ENCODE measurements at regions of chr11 and their contacts with region 1.

Region 1: DNA sequence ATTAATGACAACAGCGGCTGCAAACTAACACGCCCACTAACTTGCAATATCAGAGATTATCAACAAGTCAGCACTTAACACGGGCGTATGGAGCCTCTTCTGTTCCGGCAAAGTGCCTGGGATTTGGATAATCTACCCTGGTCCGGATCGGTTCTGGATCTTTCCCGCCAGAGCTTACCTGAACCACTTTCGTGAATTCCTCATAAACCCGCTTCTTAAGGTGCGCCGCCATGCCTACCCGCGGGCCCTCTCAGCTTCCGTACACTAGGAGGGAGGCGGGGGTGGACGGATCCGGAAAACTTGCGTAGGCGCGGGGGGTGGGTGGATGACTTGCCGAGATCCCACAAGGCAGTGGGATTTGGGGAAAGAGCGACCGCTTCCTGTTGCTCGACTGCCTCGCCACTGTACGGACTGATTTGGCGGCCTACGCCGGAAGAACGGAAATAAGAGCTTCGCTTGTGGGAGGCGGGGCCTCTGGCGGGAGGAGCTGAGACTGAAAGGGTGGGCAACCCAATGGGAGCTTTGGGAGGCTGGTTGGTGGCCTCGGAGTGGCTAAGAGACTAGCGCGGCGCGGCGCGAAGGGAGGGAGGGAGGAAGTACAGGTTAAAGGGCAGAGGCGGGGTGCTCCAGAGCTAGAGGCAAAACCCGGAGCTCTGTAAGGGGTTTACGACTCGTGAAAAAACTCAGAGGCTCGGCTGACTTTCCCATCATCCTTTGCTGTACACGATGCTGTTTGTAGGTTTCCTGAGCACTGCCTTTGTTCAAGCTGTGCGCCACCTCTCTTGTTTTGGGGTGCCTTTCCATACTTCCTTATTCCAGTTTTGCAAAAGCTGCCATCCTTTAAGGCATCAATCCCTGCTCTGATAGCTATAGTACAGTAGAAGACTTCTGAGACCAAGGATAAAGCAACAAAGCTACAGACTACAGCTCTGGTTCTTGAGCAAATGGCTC is at the start of gene INTS4:
- DNase-seq: peak; percentile 100
- H3K4me3 ChIP-seq: peak within 1 kb of the TSS; percentile 75 to 99 (median 95)
- H3K27ac ChIP-seq: peak within 1 kb of the TSS; percentile 47
- H3K4me1 ChIP-seq: peaks cover 15% of the 10 kb centered on the region
- H3K27me3 ChIP-seq: no peaks in the 10 kb centered on the region
- CTCF ChIP-seq: no peak
- POLR2A ChIP-seq: peak; percentile 77
- total RNA-seq, gene INTS4: 37.8 and 39.2 TPM in 2 replicates

Region 2: DNA sequence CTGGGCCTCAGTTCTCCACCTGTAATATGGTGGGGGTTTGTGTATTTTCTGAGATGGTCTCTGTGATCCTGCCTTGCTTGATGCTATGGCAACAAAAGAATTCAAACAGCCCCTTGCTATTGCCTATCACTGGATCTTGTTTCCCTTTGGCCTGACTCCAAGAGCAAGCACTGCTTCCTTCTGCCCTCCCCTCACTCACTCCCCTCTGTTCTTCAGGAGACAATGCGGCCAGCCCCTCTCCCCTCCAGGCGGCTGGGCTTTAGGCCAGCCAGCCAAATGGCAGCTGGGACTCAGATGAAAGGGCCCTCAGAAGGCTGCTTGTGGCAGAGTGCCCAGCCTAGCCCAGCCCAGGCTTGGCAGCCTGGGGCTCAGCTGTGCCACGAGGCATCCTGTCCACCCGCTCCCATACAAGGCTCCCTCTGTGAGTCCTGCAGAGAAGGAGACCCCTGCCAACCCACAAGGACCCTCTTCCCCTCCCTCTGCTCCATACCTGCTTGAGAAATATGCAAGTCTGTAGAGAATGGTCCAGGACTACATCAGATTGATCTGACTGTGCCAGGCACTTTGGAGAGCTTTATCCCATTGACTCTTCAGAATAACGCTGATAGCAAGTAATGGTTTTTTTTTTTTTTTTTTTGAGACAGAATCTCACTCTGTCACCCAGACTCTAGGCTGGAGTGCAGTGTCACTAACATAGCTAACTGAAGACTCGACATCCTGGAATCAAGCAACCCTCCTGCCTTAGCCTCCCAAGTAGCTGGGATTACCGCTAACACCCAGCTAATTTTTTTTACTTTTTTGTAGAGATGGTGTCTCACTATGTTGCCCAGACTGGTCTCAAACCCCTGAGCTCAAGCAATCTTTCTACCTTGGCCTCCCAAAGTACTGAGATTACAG is 36.0 kb after region 1 on chr11:
- CTCF ChIA-PET with region 1: interaction called, 5 read pairs
- POLR2A ChIA-PET with region 1: no interaction called
- dilution Hi-C with region 1: no loop called
- intact Hi-C with region 1: loop called (anchors 2 kb)
- DNase-seq: peak; percentile 96
- H3K4me3 ChIP-seq: no peak overlapping the region
- H3K27ac ChIP-seq: peak overlapping the region; percentile 40
- H3K4me1 ChIP-seq: peaks cover 13% of the 10 kb centered on the region
- H3K27me3 ChIP-seq: no peaks in the 10 kb centered on the region
- CTCF ChIP-seq: no peak
- POLR2A ChIP-seq: no peak

Region 3: GRCh38 chr11:78112582-78113275 is 118.0 kb after region 1 on chr11:
- CTCF ChIA-PET with region 1: no interaction called
- POLR2A ChIA-PET with region 1: no interaction called
- dilution Hi-C with region 1: no loop called
- intact Hi-C with region 1: no loop called
- DNase-seq: no peak
- H3K4me3 ChIP-seq: no peak overlapping the region
- H3K27ac ChIP-seq: no peak overlapping the region
- H3K4me1 ChIP-seq: no peaks in the 10 kb centered on the region
- H3K27me3 ChIP-seq: no peaks in the 10 kb centered on the region
- CTCF ChIP-seq: no peak
- POLR2A ChIP-seq: no peak

Region 4: DNA sequence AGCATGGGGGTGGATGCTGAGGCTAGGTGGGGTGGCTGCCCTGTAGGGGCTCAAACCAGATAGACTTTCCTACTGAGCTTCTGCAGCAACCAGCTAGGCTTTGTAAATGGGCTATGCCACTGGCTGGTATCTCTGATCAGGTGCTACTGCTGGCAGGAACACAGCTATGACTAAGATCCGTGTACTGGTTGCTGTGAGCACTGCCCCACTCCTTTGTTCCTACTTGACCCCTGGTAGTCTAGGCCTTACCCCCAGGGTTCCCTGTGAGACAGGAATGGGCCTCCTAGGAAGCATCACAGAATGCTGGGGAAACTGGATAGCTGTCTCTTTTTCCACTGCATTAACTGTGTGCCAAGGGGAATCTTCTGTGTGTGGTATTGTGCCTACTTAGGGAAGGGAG is 481.4 kb after region 1 on chr11:
- CTCF ChIA-PET with region 1: no interaction called
- POLR2A ChIA-PET with region 1: no interaction called
- dilution Hi-C with region 1: no loop called
- intact Hi-C with region 1: no loop called
- DNase-seq: peak; percentile 11
- H3K4me3 ChIP-seq: no peak overlapping the region
- H3K27ac ChIP-seq: no peak overlapping the region
- H3K4me1 ChIP-seq: no peaks in the 10 kb centered on the region
- H3K27me3 ChIP-seq: no peaks in the 10 kb centered on the region
- CTCF ChIP-seq: no peak
- POLR2A ChIP-seq: no peak

Region 5: GRCh38 chr11:78574386-78575381 is 580.0 kb after region 1 on chr11 and contains the start of gene NARS2:
- CTCF ChIA-PET with region 1: no interaction called
- POLR2A ChIA-PET with region 1: no interaction called
- dilution Hi-C with region 1: no loop called
- intact Hi-C with region 1: no loop called
- DNase-seq: peak; percentile 97
- H3K4me3 ChIP-seq: peak within 1 kb of the TSS; percentile 84 to 93 (median 91)
- H3K27ac ChIP-seq: peak within 1 kb of the TSS; percentile 60
- H3K4me1 ChIP-seq: peaks cover 14% of the 10 kb centered on the region
- H3K27me3 ChIP-seq: no peaks in the 10 kb centered on the region
- CTCF ChIP-seq: no peak
- POLR2A ChIP-seq: peak; percentile 79
- total RNA-seq, gene NARS2: 15.5 and 16.7 TPM in 2 replicates

Measured in endothelial cell of umbilical vein (primary cell).